Lower leg skin (tissue), 4 donors: ENCODE measurements at regions of chr3 and their contacts with region 1.

Region 1: DNA sequence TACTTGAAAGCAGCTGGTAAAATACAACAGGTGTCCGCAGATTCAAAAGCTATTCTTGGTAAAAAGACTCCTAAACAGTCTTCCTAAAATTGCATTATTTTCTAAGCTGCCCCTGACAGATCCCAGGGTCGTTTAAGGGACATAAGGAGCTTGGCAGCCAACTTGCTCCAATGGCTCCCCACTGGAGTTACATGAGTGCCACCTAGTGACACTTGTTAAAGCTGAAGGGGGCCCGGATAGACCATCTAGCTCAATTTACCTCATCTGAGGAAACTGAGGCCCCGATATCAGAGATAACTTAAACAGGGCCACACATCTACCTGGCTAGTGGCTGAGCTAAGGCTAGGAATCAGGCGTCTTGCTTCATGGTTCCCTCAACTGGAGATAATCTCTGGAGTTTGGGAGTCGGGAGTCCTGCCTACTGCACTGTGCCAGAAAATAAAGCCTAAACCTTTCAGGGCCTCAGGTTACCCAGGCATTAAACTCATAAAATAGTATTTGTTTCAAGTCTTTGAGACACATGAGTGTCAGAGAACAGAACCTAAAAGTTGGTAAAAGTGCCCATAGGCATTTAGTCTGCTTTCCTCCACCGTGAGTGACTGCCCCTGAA is 6.5 kb upstream of the TBC1D23 start:
- DNase-seq: peak in 1 of 2 donors; percentile 37
- H3K4me3 ChIP-seq: no peak overlapping the region
- CTCF ChIP-seq: no peak
- POLR2A ChIP-seq: no peak

Region 2: GRCh38 chr3:100068826-100069225 is 185.4 kb before region 1 on chr3:
- intact Hi-C with region 1: loop called (anchors 10 kb)
- DNase-seq: peak; percentile 77 to 91
- H3K4me3 ChIP-seq: no peak overlapping the region
- CTCF ChIP-seq: no peak
- POLR2A ChIP-seq: no peak